T-cell (primary cell): ENCODE measurements at regions of chrX and their contacts with region 1.

Region 1: DNA sequence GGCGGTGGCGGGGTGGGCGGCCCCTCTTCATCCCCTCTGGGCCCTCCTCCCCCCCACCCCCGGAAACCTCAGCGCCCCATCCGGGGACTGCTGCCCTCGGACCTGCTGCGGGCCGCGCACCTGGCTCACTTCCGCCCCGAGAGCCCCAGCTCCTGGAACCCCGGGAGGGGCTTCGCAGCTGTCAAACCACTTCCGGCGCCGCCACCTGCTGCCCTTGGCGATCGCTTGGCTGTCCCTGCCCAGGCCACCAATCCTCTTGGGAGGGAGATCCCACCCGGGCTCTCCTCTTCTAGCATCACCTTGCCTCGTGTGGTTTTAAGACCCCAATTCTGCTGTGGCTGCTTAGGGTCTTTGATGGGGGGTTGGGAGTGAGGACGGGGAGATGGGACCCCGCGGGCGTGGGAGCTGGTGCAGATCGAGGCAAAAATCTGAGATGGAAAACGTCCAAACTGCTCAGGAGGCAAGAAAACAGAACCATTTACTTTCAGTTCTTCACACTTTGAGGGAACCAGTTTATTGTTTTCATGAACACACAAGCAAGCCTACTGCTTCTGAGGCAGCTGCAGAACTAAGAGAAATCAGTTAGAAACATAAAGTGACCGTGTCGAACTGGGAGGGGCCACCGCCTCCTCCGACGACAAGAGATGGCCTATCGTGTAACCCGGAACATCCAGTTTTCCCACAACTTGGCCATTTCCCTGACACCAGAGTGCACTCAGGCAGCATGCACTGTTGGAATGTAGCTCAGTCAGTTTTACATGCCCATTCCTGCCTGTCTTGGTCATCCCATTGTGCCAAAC is 779 bp downstream of the MTMR1 start:
- DNase-seq: peak; percentile 31 to 73 (median 52)
- ATAC-seq: peak; percentile 53 to 74 (median 72)
- H3K4me3 ChIP-seq: peak overlapping the region; percentile 58 to 59
- H3K4me3 Mint-ChIP-seq: peak overlapping the region; percentile 88 to 94 (median 89)
- H3K27ac ChIP-seq: peak overlapping the region; percentile 93
- H3K27ac Mint-ChIP-seq: peak overlapping the region; percentile 99
- H3K4me1 ChIP-seq: peaks cover 27 to 65% of the 10 kb centered on the region in 2 experiments
- H3K4me1 Mint-ChIP-seq: peaks cover 46 to 73% (median 68%) of the 10 kb centered on the region in 3 donors
- H3K27me3 ChIP-seq: no peaks in the 10 kb centered on the region
- H3K27me3 Mint-ChIP-seq: no peaks in the 10 kb centered on the region

Region 2: GRCh38 chrX:149938427-149939270 is 755.3 kb before region 1 on chrX and contains the start of gene EOLA2:
- CTCF ChIA-PET with region 1: interaction called in 1 of 2 experiments, 11 read pairs
- POLR2A ChIA-PET with region 1: interaction called in 1 of 2 experiments, 5 read pairs
- DNase-seq: peak; percentile 82 to 97 (median 92)
- ATAC-seq: peak; percentile 54 to 66 (median 58)
- H3K4me3 ChIP-seq: peak within 1 kb of the TSS; percentile 50 to 92
- H3K4me3 Mint-ChIP-seq: peak within 1 kb of the TSS; percentile 91 to 93 (median 92)
- H3K27ac ChIP-seq: peak within 1 kb of the TSS; percentile 98
- H3K27ac Mint-ChIP-seq: peak within 1 kb of the TSS; percentile 99 to 100
- H3K4me1 ChIP-seq: peaks cover 0 to 13% of the 10 kb centered on the region in 2 experiments
- H3K4me1 Mint-ChIP-seq: peaks cover 7 to 10% (median 9%) of the 10 kb centered on the region in 3 donors
- H3K27me3 ChIP-seq: no peaks in the 10 kb centered on the region
- H3K27me3 Mint-ChIP-seq: no peaks in the 10 kb centered on the region
- total RNA-seq, gene EOLA2: 43.2 to 58.7 (median 48.5) TPM

Region 3: DNA sequence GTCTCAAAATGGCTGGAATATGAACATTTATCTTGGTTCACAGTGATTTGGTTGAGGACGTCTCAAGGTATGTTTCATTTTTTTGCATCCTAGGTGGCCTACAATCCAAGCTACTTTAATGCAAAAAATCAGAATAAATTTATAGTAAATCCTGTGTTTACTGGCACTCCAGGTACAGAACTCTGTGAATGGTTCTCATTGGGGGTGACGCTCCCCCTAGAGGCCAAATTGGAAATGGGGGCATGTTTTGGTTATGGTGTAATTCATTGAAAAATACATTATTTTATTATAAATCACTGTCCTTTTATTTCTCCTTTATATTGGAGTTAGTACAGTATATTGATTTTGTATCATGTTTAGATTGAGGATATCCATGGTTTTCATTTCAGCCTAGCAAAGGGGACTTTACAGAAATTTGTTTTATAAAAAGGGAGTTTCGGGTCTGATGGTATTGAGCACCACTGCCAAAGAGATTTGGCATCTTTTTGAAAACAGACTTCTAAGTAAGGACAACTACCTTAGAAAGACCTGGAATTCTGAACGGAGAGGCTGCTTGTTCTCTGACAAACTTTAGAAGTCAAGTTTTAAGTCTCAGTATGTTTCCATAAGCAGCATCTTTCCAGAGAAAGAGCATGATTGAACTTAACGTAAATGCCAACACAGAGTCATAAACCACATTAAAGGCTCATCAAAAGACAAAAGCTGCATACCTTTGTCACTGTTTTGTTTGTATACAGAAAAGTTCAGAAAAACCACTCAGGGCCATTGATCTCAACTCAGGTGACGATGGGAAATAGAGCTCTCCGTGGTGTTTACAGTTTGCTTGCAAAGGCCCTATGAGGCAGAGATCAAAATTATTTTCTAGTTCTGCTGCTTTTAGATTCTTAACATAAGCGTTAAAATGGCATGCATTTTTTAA is 106.1 kb before region 1 on chrX:
- CTCF ChIA-PET with region 1: interaction called in 1 of 2 experiments, 13 read pairs
- POLR2A ChIA-PET with region 1: no interaction called
- DNase-seq: peak in 33 of 35 experiments; percentile 5 to 68 (median 36)
- ATAC-seq: peak in 1 of 4 experiments; percentile 52
- H3K4me3 ChIP-seq: no peak overlapping the region
- H3K4me3 Mint-ChIP-seq: no peak overlapping the region
- H3K27ac ChIP-seq: no peak overlapping the region
- H3K27ac Mint-ChIP-seq: no peak overlapping the region
- H3K4me1 ChIP-seq: no peaks in the 10 kb centered on the region
- H3K4me1 Mint-ChIP-seq: peaks cover 5 to 37% (median 19%) of the 10 kb centered on the region in 3 donors
- H3K27me3 ChIP-seq: no peaks in the 10 kb centered on the region
- H3K27me3 Mint-ChIP-seq: peaks cover 0 to 3% of the 10 kb centered on the region in 2 donors

Region 4: GRCh38 chrX:150635952-150636351 is 58.0 kb before region 1 on chrX:
- CTCF ChIA-PET with region 1: no interaction called
- POLR2A ChIA-PET with region 1: interaction called in 1 of 2 experiments, 11 read pairs
- DNase-seq: no peak
- ATAC-seq: no peak
- H3K4me3 ChIP-seq: no peak overlapping the region
- H3K4me3 Mint-ChIP-seq: no peak overlapping the region
- H3K27ac ChIP-seq: no peak overlapping the region
- H3K27ac Mint-ChIP-seq: peak overlapping the region in 1 of 2 donors; percentile 52
- H3K4me1 ChIP-seq: no peaks in the 10 kb centered on the region
- H3K4me1 Mint-ChIP-seq: peaks cover 3 to 4% (median 4%) of the 10 kb centered on the region in 3 donors
- H3K27me3 ChIP-seq: no peaks in the 10 kb centered on the region
- H3K27me3 Mint-ChIP-seq: peaks cover 0 to 10% of the 10 kb centered on the region in 2 donors

Region 5: DNA sequence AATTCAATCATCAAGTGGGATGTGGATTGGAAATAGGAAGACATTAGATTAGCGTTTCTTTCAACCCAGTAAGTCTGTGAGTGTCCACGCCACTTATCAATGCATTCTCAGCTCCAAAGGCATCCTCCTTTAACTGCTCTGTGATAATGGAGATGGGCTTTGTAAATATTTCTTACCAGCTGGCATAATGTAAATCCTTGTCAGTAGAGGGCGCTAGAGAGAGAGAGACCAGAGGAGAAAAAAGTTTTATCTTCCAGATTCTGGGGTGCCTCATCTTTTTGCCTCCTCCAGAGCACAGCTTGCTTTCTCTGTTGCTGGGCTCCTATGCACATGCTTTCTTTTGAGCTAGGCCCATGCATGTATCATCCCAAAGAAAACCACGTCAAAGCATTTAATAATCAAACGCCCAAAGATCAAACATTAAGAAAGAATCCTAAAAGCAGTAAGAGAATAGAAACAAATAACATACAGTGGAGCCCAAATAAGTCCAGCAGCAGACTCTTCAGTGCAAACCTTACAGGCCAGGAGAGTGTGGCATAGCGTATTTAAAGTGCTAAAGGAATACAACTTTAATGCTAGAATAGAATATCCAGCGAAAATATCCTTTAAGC is 10.3 kb before region 1 on chrX:
- CTCF ChIA-PET with region 1: interaction called, 9 to 13 read pairs
- POLR2A ChIA-PET with region 1: interaction called in 1 of 2 experiments, 3 read pairs
- DNase-seq: peak in 6 of 35 experiments; percentile 7 to 77 (median 28)
- ATAC-seq: peak; percentile 36 to 63 (median 53)
- H3K4me3 ChIP-seq: no peak overlapping the region
- H3K4me3 Mint-ChIP-seq: no peak overlapping the region
- H3K27ac ChIP-seq: no peak overlapping the region
- H3K27ac Mint-ChIP-seq: no peak overlapping the region
- H3K4me1 ChIP-seq: peaks cover 0 to 6% of the 10 kb centered on the region in 2 experiments
- H3K4me1 Mint-ChIP-seq: peaks cover 9 to 13% (median 12%) of the 10 kb centered on the region in 3 donors
- H3K27me3 ChIP-seq: no peaks in the 10 kb centered on the region
- H3K27me3 Mint-ChIP-seq: peaks cover 0 to 6% of the 10 kb centered on the region in 2 donors

Region 6: DNA sequence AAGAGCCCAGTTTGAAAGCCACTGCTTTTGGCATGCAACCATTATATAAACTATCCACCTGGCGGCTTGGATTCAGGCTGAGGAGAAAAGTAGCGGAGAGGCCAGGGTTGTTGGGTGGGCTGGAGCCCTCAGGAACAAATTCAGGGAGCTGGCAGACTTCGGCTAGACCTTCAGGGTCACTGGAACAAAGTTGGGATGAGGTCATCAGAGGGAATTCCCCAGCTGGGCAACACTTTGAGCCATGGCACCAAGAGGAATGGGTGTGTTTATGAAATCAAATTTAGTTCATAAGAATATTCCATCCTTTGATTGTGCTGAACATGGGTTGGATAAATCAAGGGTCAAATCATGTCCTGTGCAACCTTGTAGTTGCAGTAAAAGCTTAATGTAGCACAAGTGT is 21.2 kb after region 1 on chrX:
- CTCF ChIA-PET with region 1: interaction called, 4 to 13 read pairs
- POLR2A ChIA-PET with region 1: interaction called, 3 read pairs
- DNase-seq: no peak
- ATAC-seq: no peak
- H3K4me3 ChIP-seq: no peak overlapping the region
- H3K4me3 Mint-ChIP-seq: no peak overlapping the region
- H3K27ac ChIP-seq: no peak overlapping the region
- H3K27ac Mint-ChIP-seq: peak overlapping the region; percentile 56 to 60
- H3K4me1 ChIP-seq: peaks cover 0 to 2% of the 10 kb centered on the region in 2 experiments
- H3K4me1 Mint-ChIP-seq: peaks cover 30 to 49% (median 44%) of the 10 kb centered on the region in 3 donors
- H3K27me3 ChIP-seq: no peaks in the 10 kb centered on the region
- H3K27me3 Mint-ChIP-seq: peaks cover 0 to 3% of the 10 kb centered on the region in 2 donors

Region 7: GRCh38 chrX:151073767-151074166 is 379.8 kb after region 1 on chrX:
- CTCF ChIA-PET with region 1: no interaction called
- POLR2A ChIA-PET with region 1: no interaction called
- DNase-seq: no peak
- ATAC-seq: no peak
- H3K4me3 ChIP-seq: no peak overlapping the region
- H3K4me3 Mint-ChIP-seq: no peak overlapping the region
- H3K27ac ChIP-seq: no peak overlapping the region
- H3K27ac Mint-ChIP-seq: no peak overlapping the region
- H3K4me1 ChIP-seq: no peaks in the 10 kb centered on the region
- H3K4me1 Mint-ChIP-seq: no peaks in the 10 kb centered on the region
- H3K27me3 ChIP-seq: peaks cover 0 to 3% of the 10 kb centered on the region in 2 experiments
- H3K27me3 Mint-ChIP-seq: peaks cover 6 to 14% of the 10 kb centered on the region in 2 donors